ENCODE measurements at regions of chrX and their contacts with region 1.

Region 1: DNA sequence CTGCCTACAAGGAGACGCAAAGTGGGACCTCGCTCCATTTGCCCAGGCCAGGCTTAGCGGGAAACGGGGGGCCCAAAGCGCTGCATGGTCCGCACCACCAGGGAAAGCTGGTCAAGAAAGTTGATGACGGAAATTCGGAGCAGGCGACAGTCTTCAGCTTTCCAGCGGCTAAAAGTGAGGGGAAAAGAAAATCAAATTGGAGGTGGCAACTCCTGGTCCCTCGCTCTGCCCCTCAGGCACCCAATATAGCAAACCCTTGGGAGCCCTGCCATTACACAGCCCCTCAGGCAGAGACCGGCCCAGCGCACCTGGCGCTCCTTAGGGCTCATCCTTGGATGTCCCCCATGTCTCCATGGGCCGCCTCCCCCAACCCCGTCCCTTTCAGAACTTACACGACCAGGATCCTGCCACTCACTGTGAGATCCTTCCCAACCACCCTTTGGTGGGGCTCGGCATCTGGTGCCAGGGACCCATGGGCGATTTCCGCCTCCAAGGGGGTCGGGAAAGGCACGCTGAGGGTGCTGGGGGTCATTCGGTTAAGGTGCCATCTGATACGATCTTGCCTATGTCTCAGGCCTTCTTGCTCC is 1.1 kb downstream of the LAGE3 start:
- DNase-seq: no peak
- ATAC-seq: 0 out of 2 replicates have a peak, but pooled peaks have one; percentile 9
- H3K4me3 ChIP-seq: peak overlapping the region; percentile 65 to 70
- H3K27ac ChIP-seq: peak overlapping the region; percentile 84
- H3K4me1 ChIP-seq: peaks cover 18% of the 10 kb centered on the region
- H3K27me3 ChIP-seq: no peaks in the 10 kb centered on the region
- CTCF ChIP-seq: no peak

Region 2: GRCh38 chrX:154373340-154374306 is 104.4 kb before region 1 on chrX:
- CTCF ChIA-PET with region 1: interaction called, 12 read pairs
- POLR2A ChIA-PET with region 1: no interaction called
- in situ Hi-C with region 1: no loop called
- intact Hi-C with region 1: no loop called
- DNase-seq: peak; percentile 61
- ATAC-seq: peak; percentile 31; the same call in 1 of the 2 replicates
- H3K4me3 ChIP-seq: peak overlapping the region; percentile 52 to 87
- H3K27ac ChIP-seq: peak overlapping the region; percentile 84
- H3K4me1 ChIP-seq: peaks cover 50% of the 10 kb centered on the region
- H3K27me3 ChIP-seq: no peaks in the 10 kb centered on the region
- CTCF ChIP-seq: no peak

Region 3: GRCh38 chrX:154419732-154420364 is 58.1 kb before region 1 on chrX:
- CTCF ChIA-PET with region 1: no interaction called
- POLR2A ChIA-PET with region 1: interaction called, 11 read pairs
- in situ Hi-C with region 1: no loop called
- intact Hi-C with region 1: no loop called
- DNase-seq: no peak
- ATAC-seq: no peak; the same call in 1 of the 2 replicates
- H3K4me3 ChIP-seq: no peak overlapping the region
- H3K27ac ChIP-seq: no peak overlapping the region
- H3K4me1 ChIP-seq: no peaks in the 10 kb centered on the region
- H3K27me3 ChIP-seq: no peaks in the 10 kb centered on the region
- CTCF ChIP-seq: no peak

Region 4: DNA sequence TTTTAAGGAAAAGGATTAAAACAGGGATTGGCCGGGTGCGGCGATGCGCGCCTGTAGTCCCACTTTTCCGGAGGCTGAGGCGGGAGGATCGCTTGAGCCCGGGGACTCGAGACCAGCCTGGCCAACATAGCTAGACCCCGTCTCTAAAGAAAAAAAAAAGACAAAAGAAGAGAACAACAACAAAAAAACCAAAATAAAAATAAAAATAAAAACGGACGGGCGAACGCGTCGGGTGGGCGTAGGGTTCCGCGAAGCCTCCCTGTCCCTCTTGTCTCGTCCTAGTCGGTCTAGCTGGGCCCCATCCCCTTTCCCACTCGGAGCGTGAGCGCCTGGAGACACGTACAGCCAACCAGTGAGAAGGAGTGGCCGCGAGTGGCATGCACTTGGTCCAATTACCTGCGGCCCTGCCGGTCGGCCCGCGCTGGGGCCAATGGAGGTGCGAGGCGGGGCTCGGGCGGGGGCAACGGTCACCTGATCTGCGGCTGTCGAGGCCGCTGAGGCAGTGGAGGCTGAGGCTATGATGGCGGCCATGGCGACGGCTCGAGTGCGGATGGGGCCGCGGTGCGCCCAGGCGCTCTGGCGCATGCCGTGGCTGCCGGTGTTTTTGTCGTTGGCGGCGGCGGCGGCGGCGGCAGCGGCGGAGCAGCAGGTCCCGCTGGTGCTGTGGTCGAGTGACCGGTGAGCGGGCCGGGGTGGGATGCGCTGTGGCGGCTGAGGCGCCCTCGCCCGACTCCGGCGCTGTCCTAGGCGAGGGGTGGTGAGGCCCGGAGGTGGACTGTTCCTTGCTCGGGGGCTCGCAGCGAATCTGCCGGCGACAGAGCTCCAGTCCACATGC is 49.6 kb before region 1 on chrX and contains the start of gene ATP6AP1:
- CTCF ChIA-PET with region 1: no interaction called
- POLR2A ChIA-PET with region 1: interaction called, 14 read pairs
- in situ Hi-C with region 1: no loop called
- intact Hi-C with region 1: no loop called
- DNase-seq: peak; percentile 68
- ATAC-seq: peak; percentile 99
- H3K4me3 ChIP-seq: peak within 1 kb of the TSS; percentile 67 to 68
- H3K27ac ChIP-seq: peak within 1 kb of the TSS; percentile 91
- H3K4me1 ChIP-seq: peaks cover 26% of the 10 kb centered on the region
- H3K27me3 ChIP-seq: no peaks in the 10 kb centered on the region
- CTCF ChIP-seq: no peak
- total RNA-seq, gene ATP6AP1: 221 TPM

Region 5: GRCh38 chrX:154458114-154458953 is 19.6 kb before region 1 on chrX and contains the start of gene PLXNA3:
- CTCF ChIA-PET with region 1: interaction called, 6 read pairs
- POLR2A ChIA-PET with region 1: interaction called, 11 read pairs
- in situ Hi-C with region 1: no loop called
- intact Hi-C with region 1: no loop called
- DNase-seq: no peak
- ATAC-seq: peak; percentile 80
- H3K4me3 ChIP-seq: peak within 1 kb of the TSS; percentile 78 to 89
- H3K27ac ChIP-seq: peak within 1 kb of the TSS; percentile 85
- H3K4me1 ChIP-seq: peaks cover 5% of the 10 kb centered on the region
- H3K27me3 ChIP-seq: no peaks in the 10 kb centered on the region
- CTCF ChIP-seq: no peak
- total RNA-seq, gene PLXNA3: 128 TPM

Region 6: GRCh38 chrX:154502098-154502497 is 24.1 kb after region 1 on chrX:
- CTCF ChIA-PET with region 1: no interaction called
- POLR2A ChIA-PET with region 1: no interaction called
- in situ Hi-C with region 1: no loop called
- intact Hi-C with region 1: no loop called
- DNase-seq: no peak
- ATAC-seq: no peak
- H3K4me3 ChIP-seq: no peak overlapping the region
- H3K27ac ChIP-seq: no peak overlapping the region
- H3K4me1 ChIP-seq: no peaks in the 10 kb centered on the region
- H3K27me3 ChIP-seq: no peaks in the 10 kb centered on the region
- CTCF ChIP-seq: no peak